ENCODE measurements at regions of chr2 and their contacts with region 1.

Region 1: DNA sequence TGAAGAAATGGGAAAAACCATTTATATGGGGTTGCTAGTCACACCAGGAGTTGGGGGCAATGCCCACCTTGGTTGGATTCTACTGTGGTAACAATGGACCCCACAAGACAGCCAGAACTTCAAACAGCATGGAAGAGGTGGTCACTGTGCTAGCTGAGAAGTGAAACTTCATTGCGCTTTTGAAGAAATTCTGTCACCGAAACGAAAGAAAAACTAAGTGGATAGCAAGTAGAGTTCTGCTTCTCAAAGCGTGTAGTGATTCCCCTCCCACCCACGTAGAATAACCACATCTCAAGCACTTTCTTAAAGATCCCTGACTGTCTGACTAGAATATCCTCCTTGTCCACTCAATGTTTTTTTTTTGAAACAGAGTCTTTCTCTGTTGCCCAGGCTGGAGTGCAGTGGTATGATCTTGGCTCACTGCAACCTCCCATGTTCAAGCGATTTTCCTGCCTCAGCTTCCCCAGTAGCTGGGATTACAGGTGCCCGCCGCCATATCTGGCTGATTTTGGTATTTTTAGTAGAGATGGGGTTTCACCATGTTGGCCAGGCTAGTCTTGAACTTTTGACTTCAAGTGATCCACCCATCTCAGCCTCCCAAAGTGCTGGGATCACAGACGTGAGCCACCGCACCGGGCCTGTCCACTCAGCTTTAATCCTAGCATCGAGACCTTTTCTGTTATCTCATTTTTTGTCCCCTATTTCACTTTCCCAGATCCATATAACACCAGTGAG is 30.1 kb upstream of the CCL20 start:
- DNase-seq: peak in 4 of 5 donors; percentile 34 to 57 (median 47)
- H3K4me3 ChIP-seq: peak overlapping the region; percentile 8 to 24
- H3K4me3 Mint-ChIP-seq: peak overlapping the region; percentile 79 to 94 (median 89)
- H3K27ac ChIP-seq: peak overlapping the region; percentile 59
- H3K27ac Mint-ChIP-seq: peak overlapping the region; percentile 86 to 95 (median 95)
- H3K4me1 ChIP-seq: peaks cover 17% of the 10 kb centered on the region
- H3K4me1 Mint-ChIP-seq: peaks cover 8 to 26% (median 18%) of the 10 kb centered on the region in 4 donors
- H3K27me3 ChIP-seq: no peaks in the 10 kb centered on the region
- H3K27me3 Mint-ChIP-seq: peaks cover 0 to 3% of the 10 kb centered on the region in 2 donors

Region 2: DNA sequence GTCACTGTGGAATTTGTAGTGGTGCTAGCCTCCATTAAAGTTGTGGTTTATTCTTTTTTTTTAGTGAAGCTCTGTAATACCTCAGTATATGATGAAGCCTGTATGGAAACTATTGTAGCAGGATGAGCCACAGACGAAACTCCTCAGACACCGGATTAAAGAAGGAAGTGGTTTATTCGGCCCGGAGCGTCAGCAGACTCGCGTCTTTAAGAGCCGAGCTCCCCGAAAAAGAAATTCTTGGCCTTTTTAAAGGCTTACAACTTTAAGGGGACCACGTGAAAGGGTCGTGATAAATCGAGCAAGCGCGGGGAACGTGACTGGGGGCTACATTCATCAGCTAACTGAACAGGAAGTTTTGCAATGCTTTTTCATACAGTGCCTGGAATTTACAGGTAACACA is 22.0 kb after region 1 on chr2:
- CTCF ChIA-PET with region 1: no interaction called
- POLR2A ChIA-PET with region 1: interaction called, 13 read pairs
- intact Hi-C with region 1: no loop called
- DNase-seq: peak; percentile 51 to 83 (median 57)
- H3K4me3 ChIP-seq: peak overlapping the region in 1 of 2 donors; percentile 18
- H3K4me3 Mint-ChIP-seq: peak overlapping the region; percentile 81 to 89 (median 84)
- H3K27ac ChIP-seq: peak overlapping the region; percentile 61
- H3K27ac Mint-ChIP-seq: peak overlapping the region; percentile 89 to 99 (median 91)
- H3K4me1 ChIP-seq: peaks cover 9% of the 10 kb centered on the region
- H3K4me1 Mint-ChIP-seq: peaks cover 11 to 18% (median 12%) of the 10 kb centered on the region in 4 donors
- H3K27me3 ChIP-seq: no peaks in the 10 kb centered on the region
- H3K27me3 Mint-ChIP-seq: no peaks in the 10 kb centered on the region

Region 3: DNA sequence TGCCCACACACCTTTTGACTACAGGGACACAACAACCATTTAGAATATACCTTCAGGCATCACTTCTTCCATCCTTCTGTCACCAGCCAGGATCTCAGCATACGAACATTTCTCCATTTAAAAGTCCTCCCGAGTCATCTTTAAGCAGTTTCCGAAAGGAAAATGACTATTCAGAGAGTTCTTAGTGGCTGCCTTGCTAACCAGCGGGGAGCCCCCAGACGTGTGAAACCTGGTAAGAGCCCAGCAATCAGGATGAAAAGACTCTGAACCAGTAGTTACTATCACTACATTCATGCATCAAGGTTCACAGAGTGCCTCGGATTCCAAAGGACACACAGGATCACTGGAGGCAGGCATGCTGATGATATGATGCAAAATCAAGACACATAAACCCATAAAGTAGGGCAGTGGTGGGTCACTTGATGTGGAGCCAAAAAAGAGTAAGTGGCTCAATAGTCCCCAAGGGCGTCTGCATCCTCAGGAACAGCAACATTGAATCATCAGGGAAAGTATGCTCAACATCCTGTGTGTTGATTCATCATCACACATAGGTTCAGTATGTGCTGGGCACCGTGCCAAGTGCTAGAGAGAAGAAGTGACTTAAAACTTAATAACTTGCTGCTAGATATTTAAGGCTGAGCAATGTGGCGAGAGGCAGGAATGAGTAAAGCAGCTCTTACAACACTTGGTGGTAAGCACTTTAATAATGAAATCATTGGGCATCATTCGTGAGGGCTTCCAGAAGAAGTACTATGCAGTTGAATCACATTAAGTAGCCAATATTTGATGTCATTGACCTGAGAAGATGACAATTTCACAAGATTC is 34.5 kb after region 1 on chr2:
- CTCF ChIA-PET with region 1: interaction called, 3 read pairs
- POLR2A ChIA-PET with region 1: interaction called, 3 read pairs
- intact Hi-C with region 1: loop called (anchors 1 kb)
- DNase-seq: peak; percentile 47 to 89 (median 58)
- H3K4me3 ChIP-seq: no peak overlapping the region
- H3K4me3 Mint-ChIP-seq: peak overlapping the region in 6 of 8 donors; percentile 3 to 53 (median 45)
- H3K27ac ChIP-seq: peak overlapping the region; percentile 40
- H3K27ac Mint-ChIP-seq: peak overlapping the region; percentile 29 to 89 (median 79)
- H3K4me1 ChIP-seq: peaks cover 16% of the 10 kb centered on the region
- H3K4me1 Mint-ChIP-seq: peaks cover 14 to 35% (median 21%) of the 10 kb centered on the region in 4 donors
- H3K27me3 ChIP-seq: no peaks in the 10 kb centered on the region
- H3K27me3 Mint-ChIP-seq: peaks cover 0 to 3% of the 10 kb centered on the region in 2 donors

Region 4: DNA sequence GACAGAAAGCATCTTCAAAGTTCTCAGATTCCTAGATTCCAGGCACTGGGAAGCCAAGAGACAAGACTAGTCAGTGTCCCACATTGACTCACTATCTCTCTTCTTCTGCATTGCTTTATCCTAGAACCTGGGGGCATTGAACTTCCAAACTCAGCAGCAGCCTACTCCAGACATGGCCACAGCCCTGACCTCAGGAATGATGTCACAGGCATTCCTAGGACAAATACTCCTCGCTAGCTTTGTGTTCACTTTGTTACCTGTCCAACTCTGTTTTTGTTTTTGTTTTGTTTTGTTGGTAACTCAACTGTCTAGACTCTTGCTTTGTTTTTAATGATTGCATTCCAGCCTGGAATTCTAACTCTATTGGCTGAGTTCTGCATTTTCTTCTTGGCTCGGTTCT is 847.2 kb after region 1 on chr2:
- CTCF ChIA-PET with region 1: no interaction called
- POLR2A ChIA-PET with region 1: no interaction called
- intact Hi-C with region 1: no loop called
- DNase-seq: no peak
- H3K4me3 ChIP-seq: no peak overlapping the region
- H3K4me3 Mint-ChIP-seq: no peak overlapping the region
- H3K27ac ChIP-seq: no peak overlapping the region
- H3K27ac Mint-ChIP-seq: no peak overlapping the region
- H3K4me1 ChIP-seq: no peaks in the 10 kb centered on the region
- H3K4me1 Mint-ChIP-seq: no peaks in the 10 kb centered on the region
- H3K27me3 ChIP-seq: no peaks in the 10 kb centered on the region
- H3K27me3 Mint-ChIP-seq: no peaks in the 10 kb centered on the region